GM23248 (cell line): ENCODE measurements at regions of chr3 and their contacts with region 1.

Region 1: GRCh38 chr3:141360888-141361598 is 7.3 kb upstream of the ZBTB38 start:
- DNase-seq: peak; percentile 84
- H3K4me3 ChIP-seq: peak overlapping the region; percentile 62
- H3K27ac ChIP-seq: peak overlapping the region; percentile 57
- H3K4me1 ChIP-seq: peaks cover 18% of the 10 kb centered on the region
- H3K27me3 ChIP-seq: no peaks in the 10 kb centered on the region

Region 2: GRCh38 chr3:141452036-141452435 is 91.0 kb after region 1 on chr3:
- in situ Hi-C with region 1: loop called (anchors 5 kb)
- DNase-seq: peak; percentile 75
- H3K4me3 ChIP-seq: no peak overlapping the region
- H3K27ac ChIP-seq: 0 out of 2 replicates have a peak overlapping the region, but pooled peaks have one; percentile 18
- H3K4me1 ChIP-seq: peaks cover 62% of the 10 kb centered on the region
- H3K27me3 ChIP-seq: no peaks in the 10 kb centered on the region

Region 3: GRCh38 chr3:141782454-141782853 is 421.4 kb after region 1 on chr3:
- in situ Hi-C with region 1: no loop called
- DNase-seq: no peak
- H3K4me3 ChIP-seq: no peak overlapping the region
- H3K27ac ChIP-seq: no peak overlapping the region
- H3K4me1 ChIP-seq: no peaks in the 10 kb centered on the region
- H3K27me3 ChIP-seq: no peaks in the 10 kb centered on the region